ENCODE measurements at regions of chr2 and their contacts with region 1.

Region 1: GRCh38 chr2:101831351-101831865 is 133.9 kb downstream of the MAP4K4 start:
- DNase-seq: peak in 2 of 3 donors; percentile 70 to 88
- ATAC-seq: peak; percentile 89
- H3K4me3 ChIP-seq: no peak overlapping the region
- H3K4me1 ChIP-seq: no peaks in the 10 kb centered on the region
- CTCF ChIP-seq: peak; percentile 73

Region 2: DNA sequence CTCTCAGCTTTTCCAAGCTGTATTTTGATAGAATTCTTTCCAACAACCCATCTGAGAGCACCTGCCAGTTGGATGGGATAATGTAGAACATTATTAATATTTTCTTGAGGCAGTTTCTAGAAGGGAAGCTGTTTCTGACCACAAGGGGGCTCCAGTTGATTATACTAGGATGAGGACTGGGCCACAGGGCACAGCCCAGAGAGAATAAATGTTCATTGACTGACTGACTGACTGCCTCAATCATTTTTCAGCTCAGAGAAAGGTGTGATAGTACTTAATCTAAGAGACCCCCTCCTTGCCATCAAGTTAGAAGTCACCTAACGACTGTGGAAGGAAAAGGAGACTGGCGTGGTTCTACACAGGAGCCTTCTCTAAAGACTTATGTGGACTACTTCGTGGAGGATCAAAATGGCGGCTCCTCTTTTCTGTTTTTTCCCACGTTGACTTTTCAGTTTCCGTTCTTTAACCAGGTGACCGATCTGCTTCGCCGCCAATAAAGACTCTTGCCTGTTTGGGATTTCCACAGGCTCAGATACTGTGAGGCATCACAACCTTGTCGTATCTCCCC is 412.2 kb before region 1 on chr2:
- intact Hi-C with region 1: loop called (anchors 5 to 10 kb)
- DNase-seq: peak in 1 of 3 donors; percentile 84
- ATAC-seq: peak; percentile 80
- H3K4me3 ChIP-seq: no peak overlapping the region
- H3K4me1 ChIP-seq: no peaks in the 10 kb centered on the region
- CTCF ChIP-seq: peak; percentile 26

Measured in mucosa of descending colon (tissue), 3 donors.